Aorta (tissue), 5 donors: ENCODE measurements at regions of chr5 and their contacts with region 1.

Region 1: DNA sequence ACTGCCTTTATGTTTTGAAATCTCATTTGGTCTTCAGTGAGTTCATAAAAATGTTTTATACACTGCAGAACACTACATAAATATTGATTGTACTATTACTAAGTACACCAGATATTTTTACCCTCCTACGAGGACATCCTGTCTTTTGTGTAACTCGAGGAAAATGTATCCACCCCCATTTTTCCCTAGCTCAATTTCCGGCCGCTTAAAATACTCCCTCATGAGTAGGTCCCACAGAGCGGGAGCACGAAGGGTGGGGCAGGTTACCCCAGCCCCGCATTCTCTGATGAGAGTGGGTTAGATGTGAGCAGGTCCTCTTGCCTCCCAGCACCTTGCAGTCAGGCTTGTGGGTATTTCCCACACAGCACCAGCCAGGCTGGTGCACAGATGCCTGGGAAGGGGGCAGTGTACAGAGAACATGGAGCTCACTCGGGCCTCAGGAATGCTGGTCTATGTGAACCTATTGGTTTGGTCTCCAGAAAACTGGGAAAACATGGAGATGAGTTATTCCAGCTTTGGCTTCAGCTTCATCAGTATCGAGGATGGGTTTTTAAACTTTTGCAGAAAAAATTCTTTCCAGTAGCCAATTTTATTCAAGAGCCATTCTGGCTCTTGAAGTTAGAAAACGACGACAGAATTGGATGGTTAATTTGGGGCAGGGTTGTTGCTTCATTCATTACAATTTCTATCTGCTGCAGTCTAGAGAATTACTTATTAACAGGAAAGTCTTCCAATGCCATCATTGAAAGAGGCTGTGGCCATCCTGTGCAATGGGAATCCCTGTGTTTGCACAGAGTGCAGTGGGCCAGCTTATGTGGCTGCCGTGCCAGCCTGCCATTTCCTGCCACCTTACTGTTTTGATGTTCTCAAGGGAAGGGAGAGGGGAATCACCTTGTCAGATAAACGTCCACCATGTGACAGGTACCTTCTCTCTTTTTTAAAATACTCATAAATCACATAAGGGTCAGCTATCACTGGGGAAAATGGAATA is 73.2 kb downstream of the WDR41 start:
- DNase-seq: peak in 1 of 2 donors; percentile 82
- ATAC-seq: peak; percentile 73
- H3K4me3 ChIP-seq: no peak overlapping the region
- H3K27ac ChIP-seq: peak overlapping the region; percentile 50 to 98
- H3K4me1 ChIP-seq: peaks cover 6 to 16% of the 10 kb centered on the region in 2 donors
- H3K27me3 ChIP-seq: no peaks in the 10 kb centered on the region

Region 2: DNA sequence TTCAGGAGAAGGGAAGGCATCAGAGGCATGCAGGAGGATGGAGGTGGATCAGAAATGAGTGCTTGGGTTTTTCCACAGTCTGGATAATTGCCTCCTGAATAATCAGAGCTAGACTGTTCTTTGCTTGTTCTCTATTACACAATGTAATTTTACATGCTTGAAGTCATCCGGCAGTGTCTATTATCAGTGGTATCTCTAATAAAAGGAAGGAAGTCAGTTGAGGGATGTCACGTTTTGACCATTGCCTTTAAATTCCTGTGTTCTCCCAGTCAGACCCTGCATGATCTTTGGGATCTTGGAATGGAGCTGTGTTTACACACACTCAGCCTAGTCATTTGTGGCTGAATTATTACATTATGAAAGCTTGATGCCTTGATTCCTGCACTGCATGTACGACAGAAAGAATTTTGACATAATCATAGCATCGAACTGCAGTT is 117.4 kb before region 1 on chr5:
- intact Hi-C with region 1: loop called in 1 of 2 experiments (anchors 10 kb)
- DNase-seq: no peak
- ATAC-seq: no peak
- H3K4me3 ChIP-seq: no peak overlapping the region
- H3K27ac ChIP-seq: peak overlapping the region in 1 of 2 donors; percentile 21
- H3K4me1 ChIP-seq: peaks cover 0 to 8% of the 10 kb centered on the region in 2 donors
- H3K27me3 ChIP-seq: no peaks in the 10 kb centered on the region

Region 3: GRCh38 chr5:77437194-77437593 is 18.3 kb after region 1 on chr5:
- intact Hi-C with region 1: no loop called
- DNase-seq: no peak
- ATAC-seq: no peak
- H3K4me3 ChIP-seq: no peak overlapping the region
- H3K27ac ChIP-seq: no peak overlapping the region
- H3K4me1 ChIP-seq: no peaks in the 10 kb centered on the region
- H3K27me3 ChIP-seq: no peaks in the 10 kb centered on the region